Right cardiac atrium (tissue), 5 donors: ENCODE measurements at regions of chr5 and their contacts with region 1.

Region 1: GRCh38 chr5:58886315-58887207 is 303.7 kb downstream of the RAB3C start:
- DNase-seq: peak; percentile 62 to 83 (median 70)
- ATAC-seq: peak; percentile 46 to 51
- H3K4me3 ChIP-seq: no peak overlapping the region
- H3K27ac ChIP-seq: no peak overlapping the region
- H3K4me1 ChIP-seq: peaks cover 4% of the 10 kb centered on the region
- H3K27me3 ChIP-seq: no peaks in the 10 kb centered on the region

Region 2: GRCh38 chr5:58999804-59000595 is 113.4 kb after region 1 on chr5:
- intact Hi-C with region 1: loop called (anchors 5 to 10 kb)
- DNase-seq: peak in 1 of 3 donors; percentile 49
- ATAC-seq: peak in 1 of 2 donors; percentile 18
- H3K4me3 ChIP-seq: no peak overlapping the region
- H3K27ac ChIP-seq: no peak overlapping the region
- H3K4me1 ChIP-seq: peaks cover 6% of the 10 kb centered on the region
- H3K27me3 ChIP-seq: no peaks in the 10 kb centered on the region

Region 3: DNA sequence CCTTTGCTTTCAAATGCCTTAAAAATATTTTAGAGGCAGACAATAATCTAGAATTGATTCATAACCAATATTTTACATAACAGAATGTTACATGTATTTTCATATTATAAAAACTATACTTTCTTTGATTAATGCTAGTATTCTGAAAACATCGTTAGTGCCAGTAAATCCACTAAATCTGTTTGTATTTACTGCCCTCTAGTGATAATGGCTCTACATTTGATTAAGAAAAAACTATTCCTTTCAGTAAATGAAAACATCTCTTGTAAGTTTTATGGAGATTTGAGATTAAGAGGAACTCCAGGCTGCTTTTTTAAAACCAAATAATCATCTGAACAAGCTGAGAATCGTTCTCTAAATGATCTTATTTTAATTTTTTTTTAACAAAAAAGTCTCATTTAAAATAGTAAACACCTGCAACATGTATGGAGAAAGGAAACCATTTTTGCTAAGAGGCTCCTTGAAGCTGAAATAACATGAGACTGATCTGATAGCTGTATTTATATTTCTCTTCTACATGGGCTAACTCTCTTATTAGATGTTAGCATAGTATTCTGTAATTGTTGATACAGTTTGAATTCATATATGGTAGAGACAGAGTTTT is 121.0 kb after region 1 on chr5:
- intact Hi-C with region 1: loop called (anchors 5 to 10 kb)
- DNase-seq: no peak
- ATAC-seq: no peak
- H3K4me3 ChIP-seq: no peak overlapping the region
- H3K27ac ChIP-seq: no peak overlapping the region
- H3K4me1 ChIP-seq: peaks cover 6% of the 10 kb centered on the region
- H3K27me3 ChIP-seq: no peaks in the 10 kb centered on the region

Region 4: GRCh38 chr5:59174248-59174844 is 287.8 kb after region 1 on chr5:
- intact Hi-C with region 1: loop called (anchors 5 to 10 kb)
- DNase-seq: no peak
- ATAC-seq: peak; percentile 83
- H3K4me3 ChIP-seq: no peak overlapping the region
- H3K27ac ChIP-seq: no peak overlapping the region
- H3K4me1 ChIP-seq: peaks cover 2% of the 10 kb centered on the region
- H3K27me3 ChIP-seq: no peaks in the 10 kb centered on the region

Region 5: GRCh38 chr5:59367791-59368394 is 481.3 kb after region 1 on chr5:
- intact Hi-C with region 1: loop called in 1 of 4 experiments (anchors 10 kb)
- DNase-seq: peak; percentile 51 to 72 (median 56)
- ATAC-seq: peak; percentile 68 to 78
- H3K4me3 ChIP-seq: no peak overlapping the region
- H3K27ac ChIP-seq: no peak overlapping the region
- H3K4me1 ChIP-seq: no peaks in the 10 kb centered on the region
- H3K27me3 ChIP-seq: no peaks in the 10 kb centered on the region

Region 6: GRCh38 chr5:60340965-60341471 is 1454.5 kb after region 1 on chr5:
- intact Hi-C with region 1: no loop called
- DNase-seq: no peak
- ATAC-seq: no peak
- H3K4me3 ChIP-seq: no peak overlapping the region
- H3K27ac ChIP-seq: no peak overlapping the region
- H3K4me1 ChIP-seq: no peaks in the 10 kb centered on the region
- H3K27me3 ChIP-seq: no peaks in the 10 kb centered on the region